ENCODE measurements at regions of chrX and their contacts with region 1.

Region 1: DNA sequence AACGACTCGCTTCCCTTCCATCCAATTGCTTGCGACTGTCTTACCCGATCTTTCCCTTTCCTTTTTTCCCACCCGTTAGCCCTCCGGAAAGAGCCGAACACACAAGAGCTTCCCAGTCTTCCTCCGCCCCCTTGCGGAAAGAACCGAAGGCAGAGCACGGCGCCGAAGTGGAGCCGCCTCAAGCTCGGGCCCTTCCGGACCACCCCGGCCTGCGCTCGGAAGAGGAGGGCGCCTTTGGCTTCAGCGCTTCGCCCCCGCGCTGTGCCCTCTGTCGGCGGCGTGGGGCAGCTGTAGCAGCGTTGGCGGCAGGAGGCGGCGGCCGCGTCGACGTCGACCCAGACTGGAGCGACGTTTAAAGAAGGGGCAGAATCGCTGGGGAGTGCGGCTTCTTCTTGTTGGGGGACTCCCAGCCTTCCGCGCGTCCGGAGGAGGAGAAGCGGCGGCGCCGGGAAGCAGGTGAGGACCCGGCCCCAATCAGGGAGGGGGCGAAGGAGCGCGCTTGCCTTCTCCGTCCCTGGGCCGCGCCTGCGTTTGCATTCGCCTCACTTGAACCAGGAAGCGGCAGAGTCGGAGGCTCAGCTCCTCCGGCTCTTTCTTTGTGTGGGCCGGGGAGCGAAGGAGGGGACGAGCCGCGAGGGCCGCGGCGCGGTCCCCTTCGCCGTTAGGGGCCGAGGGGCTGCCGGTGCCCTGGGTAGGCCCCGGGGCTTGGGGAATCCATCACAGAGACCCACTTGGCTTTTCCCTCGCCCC is at the start of gene ZBTB33:
- DNase-seq: peak; percentile 92
- H3K4me3 Mint-ChIP-seq: peak within 1 kb of the TSS; percentile 89
- H3K27ac Mint-ChIP-seq: peak within 1 kb of the TSS; percentile 96
- H3K4me1 Mint-ChIP-seq: peaks cover 22% of the 10 kb centered on the region
- H3K27me3 Mint-ChIP-seq: no peaks in the 10 kb centered on the region
- total RNA-seq, gene ZBTB33: 12.1 to 12.6 TPM

Region 2: GRCh38 chrX:119871599-119872395 is 378.9 kb before region 1 on chrX and contains the starts of genes NDUFA1 and RNF113A:
- CTCF ChIA-PET with region 1: no interaction called
- intact Hi-C with region 1: loop called (anchors 2 kb)
- DNase-seq: peak; percentile 86
- H3K4me3 Mint-ChIP-seq: peak within 1 kb of the TSS; percentile 97
- H3K27ac Mint-ChIP-seq: peak within 1 kb of the TSS; percentile 98
- H3K4me1 Mint-ChIP-seq: peaks cover 13% of the 10 kb centered on the region
- H3K27me3 Mint-ChIP-seq: no peaks in the 10 kb centered on the region
- total RNA-seq, gene NDUFA1: 105 to 107 TPM
- total RNA-seq, gene RNF113A: 20.8 to 22.0 TPM

Region 3: GRCh38 chrX:119943185-119943988 is 307.3 kb before region 1 on chrX and contains the start of gene NKAP:
- CTCF ChIA-PET with region 1: no interaction called
- intact Hi-C with region 1: loop called (anchors 1 kb)
- DNase-seq: peak; percentile 86
- H3K4me3 Mint-ChIP-seq: peak within 1 kb of the TSS; percentile 98
- H3K27ac Mint-ChIP-seq: peak within 1 kb of the TSS; percentile 95
- H3K4me1 Mint-ChIP-seq: peaks cover 23% of the 10 kb centered on the region
- H3K27me3 Mint-ChIP-seq: no peaks in the 10 kb centered on the region
- total RNA-seq, gene NKAP: 12.3 to 12.7 TPM

Region 4: DNA sequence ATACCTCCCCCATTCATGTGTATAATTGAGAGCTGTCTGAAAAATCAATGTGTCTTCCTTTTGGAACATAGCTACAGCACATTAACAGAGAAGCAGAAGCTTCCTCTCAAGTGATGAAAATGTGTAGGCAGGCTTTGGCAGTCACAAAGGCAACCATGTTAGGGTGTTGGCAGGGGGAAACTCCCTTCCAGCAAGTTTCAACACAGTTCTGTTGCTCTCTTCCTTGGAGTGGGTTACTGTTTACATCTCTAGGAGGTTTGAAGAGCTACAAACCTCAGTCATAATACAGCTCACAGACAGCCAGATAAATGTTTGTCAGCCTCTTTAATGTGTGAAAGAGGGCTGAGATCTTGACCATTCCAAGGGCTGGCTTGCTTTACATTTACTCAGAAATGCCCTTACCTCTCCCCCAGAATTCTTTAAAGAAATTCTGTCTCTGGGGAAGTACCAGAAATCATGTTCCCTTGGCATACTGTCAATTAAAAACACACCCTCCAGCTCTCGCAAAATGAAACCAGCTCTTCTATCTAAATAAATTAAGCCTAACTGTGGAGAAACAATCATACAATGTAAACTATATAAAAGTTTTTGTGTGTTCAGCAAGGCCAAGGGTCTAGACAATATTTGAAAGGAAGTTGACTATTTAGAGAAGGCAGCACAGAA is 18.8 kb after region 1 on chrX:
- CTCF ChIA-PET with region 1: interaction called, 3 read pairs
- intact Hi-C with region 1: loop called (anchors 1 kb)
- DNase-seq: peak; percentile 45
- H3K4me3 Mint-ChIP-seq: no peak overlapping the region
- H3K27ac Mint-ChIP-seq: peak overlapping the region; percentile 75
- H3K4me1 Mint-ChIP-seq: peaks cover 12% of the 10 kb centered on the region
- H3K27me3 Mint-ChIP-seq: no peaks in the 10 kb centered on the region

Region 5: GRCh38 chrX:120308959-120309872 is 58.5 kb after region 1 on chrX:
- CTCF ChIA-PET with region 1: interaction called, 8 read pairs
- intact Hi-C with region 1: loop called (anchors 1 kb)
- DNase-seq: peak; percentile 80
- H3K4me3 Mint-ChIP-seq: peak overlapping the region; percentile 79
- H3K27ac Mint-ChIP-seq: peak overlapping the region; percentile 15
- H3K4me1 Mint-ChIP-seq: peaks cover 7% of the 10 kb centered on the region
- H3K27me3 Mint-ChIP-seq: peaks cover 17% of the 10 kb centered on the region

Region 6: DNA sequence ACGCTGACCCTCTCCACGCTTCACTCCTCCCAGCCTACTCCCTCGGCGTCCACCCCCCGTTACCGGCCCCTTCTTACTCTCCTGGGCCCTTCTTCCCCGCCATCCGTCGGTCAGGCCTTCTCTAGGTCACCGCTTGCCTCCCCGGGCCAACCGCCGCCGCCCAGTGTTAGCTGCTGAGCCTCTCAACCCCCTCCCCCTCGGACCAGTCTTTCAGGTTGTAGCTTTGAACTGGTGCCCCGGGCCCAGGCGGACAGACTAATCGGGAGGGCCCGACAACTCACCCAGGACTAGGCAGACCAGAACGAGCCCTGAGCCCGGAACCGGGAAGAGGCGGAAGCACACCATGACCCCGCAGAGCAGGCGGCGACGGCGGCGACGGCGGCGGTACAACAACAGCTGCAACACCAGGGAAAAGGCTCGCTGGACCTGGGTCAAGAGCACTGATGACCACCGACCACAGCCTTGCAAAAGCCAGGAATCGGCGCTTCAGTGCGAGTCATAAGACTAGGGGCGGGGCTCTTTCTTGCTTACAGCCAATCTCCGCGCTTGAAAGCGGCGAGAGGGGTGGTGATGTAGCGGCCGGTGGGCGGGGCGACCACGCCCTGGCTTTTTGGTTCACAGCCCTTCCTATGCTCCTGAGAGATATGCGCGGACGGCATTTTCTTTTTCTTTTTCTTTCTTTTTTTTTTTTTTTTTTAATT is 218.3 kb after region 1 on chrX and contains the start of gene LAMP2:
- CTCF ChIA-PET with region 1: no interaction called
- intact Hi-C with region 1: loop called (anchors 1 kb)
- DNase-seq: peak; percentile 87
- H3K4me3 Mint-ChIP-seq: peak within 1 kb of the TSS; percentile 86
- H3K27ac Mint-ChIP-seq: peak within 1 kb of the TSS; percentile 91
- H3K4me1 Mint-ChIP-seq: peaks cover 15% of the 10 kb centered on the region
- H3K27me3 Mint-ChIP-seq: no peaks in the 10 kb centered on the region
- total RNA-seq, gene LAMP2: 37.9 to 38.0 TPM

Region 7: GRCh38 chrX:120672390-120672789 is 421.7 kb after region 1 on chrX:
- CTCF ChIA-PET with region 1: no interaction called
- intact Hi-C with region 1: no loop called
- DNase-seq: no peak
- H3K4me3 Mint-ChIP-seq: no peak overlapping the region
- H3K27ac Mint-ChIP-seq: no peak overlapping the region
- H3K4me1 Mint-ChIP-seq: peaks cover 14% of the 10 kb centered on the region
- H3K27me3 Mint-ChIP-seq: no peaks in the 10 kb centered on the region